GM12878 (cell line): ENCODE measurements at regions of chr1 and their contacts with region 1.

Region 1: GRCh38 chr1:66242646-66243547 is 291.1 kb upstream of the SGIP1 start:
- DNase-seq: no peak
- ATAC-seq: peak; percentile 86
- H3K4me3 ChIP-seq: no peak overlapping the region
- H3K27ac ChIP-seq: no peak overlapping the region
- H3K4me1 ChIP-seq: peaks cover 7% of the 10 kb centered on the region
- H3K27me3 ChIP-seq: 0 out of 4 replicates have a peak, but pooled peaks cover 0 to 1% of the 10 kb centered on the region in 2 experiments
- CTCF ChIP-seq: peak; percentile 99 to 100 (median 99); a peak in 5 of 6 replicates
- EP300 ChIP-seq: no peak
- POLR2A ChIP-seq: no peak
- RAD21 ChIP-seq: peak; percentile 97

Region 2: DNA sequence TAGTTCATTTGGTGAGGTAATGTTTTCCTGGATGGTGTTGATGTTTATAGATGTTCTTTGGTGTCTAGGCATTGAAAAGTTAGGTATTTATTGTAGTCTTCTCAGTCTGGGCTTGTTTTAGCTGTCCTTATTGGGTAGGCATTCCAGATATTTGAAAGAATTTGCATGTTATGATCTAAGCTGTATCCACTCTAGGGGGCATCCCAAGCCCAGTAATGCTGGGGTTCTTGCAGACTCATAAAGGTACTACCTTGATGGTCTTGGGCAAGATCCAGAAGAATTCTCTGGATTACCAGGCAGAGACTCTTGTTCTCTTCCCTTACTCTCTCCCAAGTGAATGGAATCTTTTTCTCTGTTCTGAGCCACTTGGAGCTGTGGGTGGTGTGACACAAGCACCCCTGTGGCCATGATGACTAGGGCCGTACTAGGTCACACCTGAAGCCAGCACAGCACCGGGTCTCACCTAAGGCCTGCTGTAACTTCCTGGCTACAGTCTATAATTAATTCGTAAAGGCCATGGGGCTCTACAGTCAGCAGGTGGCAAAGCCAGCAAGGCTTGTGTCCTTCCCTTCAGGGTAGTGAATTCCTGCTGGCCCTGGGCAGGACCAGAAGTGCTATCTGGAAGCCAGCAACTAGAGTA is 525.0 kb before region 1 on chr1:
- CTCF ChIA-PET with region 1: no interaction called
- POLR2A ChIA-PET with region 1: no interaction called
- RAD21 ChIA-PET with region 1: interaction called, 3 read pairs
- SMC1A ChIA-PET with region 1: no interaction called
- in situ Hi-C with region 1: loop called (anchors 25 kb)
- intact Hi-C with region 1: loop called (anchors 5 kb)
- DNase-seq: no peak
- ATAC-seq: 0 out of 3 replicates have a peak, but pooled peaks have one; percentile 23
- H3K4me3 ChIP-seq: no peak overlapping the region
- H3K27ac ChIP-seq: no peak overlapping the region
- H3K4me1 ChIP-seq: no peaks in the 10 kb centered on the region
- H3K27me3 ChIP-seq: no peaks in the 10 kb centered on the region
- CTCF ChIP-seq: peak in 1 of 3 experiments; percentile 20; a peak in 1 of 6 replicates
- EP300 ChIP-seq: no peak
- POLR2A ChIP-seq: no peak
- RAD21 ChIP-seq: peak; percentile 49

Region 3: GRCh38 chr1:66000033-66000637 is 242.8 kb before region 1 on chr1:
- CTCF ChIA-PET with region 1: interaction called, 13 read pairs
- POLR2A ChIA-PET with region 1: no interaction called
- RAD21 ChIA-PET with region 1: no interaction called
- SMC1A ChIA-PET with region 1: no interaction called
- in situ Hi-C with region 1: no loop called
- intact Hi-C with region 1: no loop called
- DNase-seq: no peak
- ATAC-seq: no peak
- H3K4me3 ChIP-seq: no peak overlapping the region
- H3K27ac ChIP-seq: no peak overlapping the region
- H3K4me1 ChIP-seq: no peaks in the 10 kb centered on the region
- H3K27me3 ChIP-seq: no peaks in the 10 kb centered on the region
- CTCF ChIP-seq: no peak
- EP300 ChIP-seq: no peak
- POLR2A ChIP-seq: no peak
- RAD21 ChIP-seq: no peak

Region 4: DNA sequence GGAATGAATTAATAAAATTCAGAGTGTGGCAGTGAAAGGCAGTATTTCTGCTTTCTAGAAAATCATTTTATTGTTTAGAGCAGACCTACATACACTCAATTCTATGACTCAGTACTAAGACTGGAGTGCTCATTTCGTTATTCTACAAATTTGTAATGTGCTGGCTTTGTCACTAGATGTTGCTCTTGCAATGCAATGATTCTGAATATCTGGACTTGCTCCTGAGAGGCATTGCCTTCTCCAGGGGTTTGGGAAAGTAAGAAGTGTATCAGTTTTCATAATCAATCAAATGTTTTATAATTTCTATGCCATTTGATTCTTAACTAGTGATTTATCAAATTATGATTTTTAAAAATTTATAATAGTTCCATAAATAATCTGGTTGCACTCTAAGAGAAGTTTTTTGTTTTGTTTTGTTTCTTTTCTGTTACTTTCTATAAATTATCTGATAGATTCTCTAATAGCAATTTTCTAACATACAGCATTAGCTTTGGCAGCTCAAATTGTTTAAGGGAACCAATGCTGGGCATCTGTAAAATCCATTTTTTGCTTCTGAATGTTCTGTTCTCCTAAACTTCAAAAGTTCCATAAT is 10.5 kb after region 1 on chr1:
- CTCF ChIA-PET with region 1: interaction called, 105 read pairs
- POLR2A ChIA-PET with region 1: no interaction called
- RAD21 ChIA-PET with region 1: interaction called, 23 read pairs
- SMC1A ChIA-PET with region 1: interaction called, 22 read pairs
- in situ Hi-C with region 1: no loop called
- intact Hi-C with region 1: no loop called
- DNase-seq: peak; percentile 55
- ATAC-seq: peak; percentile 90
- H3K4me3 ChIP-seq: no peak overlapping the region
- H3K27ac ChIP-seq: no peak overlapping the region
- H3K4me1 ChIP-seq: peaks cover 1% of the 10 kb centered on the region; the same call in 1 of the 2 replicates
- H3K27me3 ChIP-seq: no peaks in the 10 kb centered on the region
- CTCF ChIP-seq: peak; percentile 75 to 92 (median 81)
- EP300 ChIP-seq: no peak
- POLR2A ChIP-seq: no peak
- RAD21 ChIP-seq: peak; percentile 100

Region 5: DNA sequence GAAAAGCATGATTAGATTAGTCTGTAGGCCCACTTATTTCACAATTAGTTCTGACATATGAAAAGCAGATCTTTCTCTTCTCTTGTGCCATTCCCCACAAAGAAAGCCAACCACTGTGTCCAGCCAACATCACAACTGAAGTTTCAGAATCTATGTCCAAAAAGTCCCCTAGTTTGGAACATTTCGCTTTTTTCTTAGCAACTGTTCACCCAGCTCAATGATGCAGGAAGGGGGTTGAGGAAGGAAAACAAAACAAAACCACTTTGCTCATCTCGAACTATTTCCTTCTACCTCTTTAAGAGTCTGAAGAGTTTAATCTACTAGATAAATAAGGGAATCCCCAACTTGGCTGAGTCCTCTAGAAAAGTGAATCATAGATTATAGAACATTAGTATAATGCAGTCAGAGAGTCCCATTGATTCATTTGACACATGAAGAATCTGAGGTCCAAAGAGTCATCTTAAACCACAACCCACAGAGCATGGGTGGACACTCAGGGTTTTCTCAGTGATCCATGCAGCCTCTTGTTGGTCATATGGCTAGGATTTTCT is 131.7 kb after region 1 on chr1:
- CTCF ChIA-PET with region 1: interaction called, 5 read pairs
- POLR2A ChIA-PET with region 1: no interaction called
- RAD21 ChIA-PET with region 1: interaction called, 6 read pairs
- SMC1A ChIA-PET with region 1: interaction called, 13 read pairs
- in situ Hi-C with region 1: no loop called
- intact Hi-C with region 1: no loop called
- DNase-seq: peak; percentile 96
- ATAC-seq: peak; percentile 66
- H3K4me3 ChIP-seq: no peak overlapping the region
- H3K27ac ChIP-seq: peak overlapping the region; percentile 92
- H3K4me1 ChIP-seq: peaks cover 65% of the 10 kb centered on the region
- H3K27me3 ChIP-seq: no peaks in the 10 kb centered on the region
- CTCF ChIP-seq: no peak
- EP300 ChIP-seq: peak; percentile 75 to 85; a peak in 3 of 4 replicates
- POLR2A ChIP-seq: no peak
- RAD21 ChIP-seq: peak; percentile 16

Region 6: DNA sequence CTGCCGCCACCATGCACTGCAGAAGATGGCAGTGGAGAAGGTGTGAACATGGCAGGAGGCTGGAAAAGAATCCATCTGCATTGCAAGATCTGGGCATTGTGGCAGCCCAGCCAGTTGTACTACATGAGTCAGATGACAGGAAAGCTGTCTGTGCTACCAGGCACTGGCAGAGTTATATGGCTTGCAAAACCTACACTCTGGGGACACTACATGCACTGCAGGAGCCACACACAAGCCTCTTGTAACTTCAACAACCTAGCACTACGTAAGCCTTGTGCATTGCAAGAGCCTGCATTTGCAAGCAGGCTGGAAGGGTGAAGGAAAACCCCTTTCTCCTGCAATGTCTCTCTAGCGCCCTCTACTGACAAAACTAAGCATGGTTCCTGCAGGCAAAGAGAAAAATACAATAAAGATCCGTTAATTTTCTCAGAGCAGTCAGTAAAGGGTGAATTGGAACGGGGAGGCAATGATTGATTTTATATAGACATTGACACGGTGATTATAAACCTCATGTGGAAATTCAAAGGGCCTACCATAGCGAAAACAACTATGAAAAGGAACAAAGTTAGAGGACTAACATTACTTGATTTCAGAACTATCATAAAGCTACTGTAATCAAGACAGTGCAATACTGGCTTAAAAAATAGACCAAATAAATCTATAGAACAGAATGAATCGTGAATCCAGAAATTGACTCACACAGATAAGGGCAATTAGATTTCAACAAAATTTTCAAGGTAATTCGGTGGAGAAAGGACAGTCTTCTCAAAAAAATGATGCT is 483.2 kb after region 1 on chr1:
- CTCF ChIA-PET with region 1: interaction called, 6 read pairs
- POLR2A ChIA-PET with region 1: no interaction called
- RAD21 ChIA-PET with region 1: no interaction called
- SMC1A ChIA-PET with region 1: no interaction called
- in situ Hi-C with region 1: no loop called
- intact Hi-C with region 1: loop called (anchors 5 kb)
- DNase-seq: peak; percentile 26
- ATAC-seq: peak; percentile 93
- H3K4me3 ChIP-seq: no peak overlapping the region
- H3K27ac ChIP-seq: no peak overlapping the region
- H3K4me1 ChIP-seq: no peaks in the 10 kb centered on the region
- H3K27me3 ChIP-seq: peaks cover 0 to 8% of the 10 kb centered on the region in 2 experiments; a peak in 1 of 4 replicates
- CTCF ChIP-seq: peak; percentile 89 to 93 (median 90)
- EP300 ChIP-seq: no peak
- POLR2A ChIP-seq: no peak
- RAD21 ChIP-seq: peak; percentile 89